ENCODE measurements at regions of chr13 and their contacts with region 1.

Region 1: DNA sequence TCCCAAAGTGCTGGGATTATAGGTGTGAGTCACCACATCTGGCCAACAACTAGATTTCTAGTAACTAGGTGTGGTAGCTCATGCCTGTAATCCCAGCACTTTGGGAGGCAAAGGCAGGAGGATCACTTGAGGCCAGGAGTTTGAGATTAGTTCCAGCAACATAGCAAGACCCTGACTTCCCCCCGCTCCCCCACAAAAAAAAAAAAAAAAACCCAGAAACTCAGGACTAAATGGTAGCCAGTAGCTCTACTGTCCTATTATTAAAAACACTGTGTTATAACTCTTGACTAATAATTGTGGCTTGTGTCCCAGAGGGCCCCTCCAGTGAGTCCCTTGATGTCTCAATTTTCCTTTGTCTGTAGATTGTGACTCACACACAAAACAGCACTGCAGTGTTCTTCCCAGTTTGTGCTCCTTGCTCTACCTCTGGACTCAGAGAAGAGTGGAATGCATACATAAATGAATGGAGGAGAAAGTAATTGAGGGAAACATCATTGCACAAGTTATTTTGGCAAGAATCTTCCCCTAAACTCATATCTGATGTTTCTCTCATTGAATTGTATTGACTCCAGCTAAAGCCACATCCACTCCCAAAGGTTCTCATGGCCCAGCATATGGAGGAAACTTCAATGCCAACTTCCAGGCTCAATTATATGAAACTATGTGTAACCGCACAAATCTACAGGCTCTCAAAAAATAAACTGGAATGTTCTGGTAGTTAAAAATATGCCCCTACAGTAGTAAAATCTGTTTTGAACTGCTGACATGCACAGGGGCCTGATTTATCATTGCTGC is 8.8 kb downstream of the TPT1 start:
- DNase-seq: peak in 2 of 3 donors; percentile 71 to 72
- H3K4me3 ChIP-seq: no peak overlapping the region
- H3K4me3 Mint-ChIP-seq: peak overlapping the region in 1 of 2 donors; percentile 24
- H3K27ac ChIP-seq: peak overlapping the region in 1 of 2 donors; percentile 14
- H3K27ac Mint-ChIP-seq: peak overlapping the region; percentile 27 to 84 (median 74)
- H3K4me1 ChIP-seq: peaks cover 84 to 89% of the 10 kb centered on the region in 2 donors
- H3K4me1 Mint-ChIP-seq: peaks cover 95% of the 10 kb centered on the region
- H3K27me3 ChIP-seq: no peaks in the 10 kb centered on the region
- H3K27me3 Mint-ChIP-seq: peaks cover 0 to 3% (median 2%) of the 10 kb centered on the region in 3 donors
- CTCF ChIP-seq: no peak

Region 2: GRCh38 chr13:44373601-44374348 is 958.5 kb before region 1 on chr13 and contains the start of gene SERP2:
- intact Hi-C with region 1: no loop called
- DNase-seq: no peak
- H3K4me3 ChIP-seq: no peak within 1 kb of the TSS
- H3K4me3 Mint-ChIP-seq: peak within 1 kb of the TSS in 1 of 2 donors; percentile 73
- H3K27ac ChIP-seq: no peak within 1 kb of the TSS
- H3K27ac Mint-ChIP-seq: no peak within 1 kb of the TSS
- H3K4me1 ChIP-seq: peaks cover 6 to 14% of the 10 kb centered on the region in 2 donors
- H3K4me1 Mint-ChIP-seq: peaks cover 11% of the 10 kb centered on the region
- H3K27me3 ChIP-seq: peaks cover 6 to 25% of the 10 kb centered on the region in 2 donors
- H3K27me3 Mint-ChIP-seq: peaks cover 21 to 45% (median 34%) of the 10 kb centered on the region in 3 donors
- CTCF ChIP-seq: no peak
- polyA plus RNA-seq, gene SERP2: not detected

Region 3: GRCh38 chr13:46041419-46041839 is 709.2 kb after region 1 on chr13:
- intact Hi-C with region 1: loop called in 1 of 2 experiments (anchors 10 kb)
- DNase-seq: no peak
- H3K4me3 ChIP-seq: no peak overlapping the region
- H3K4me3 Mint-ChIP-seq: no peak overlapping the region
- H3K27ac ChIP-seq: no peak overlapping the region
- H3K27ac Mint-ChIP-seq: peak overlapping the region in 2 of 7 donors; percentile 19 to 40
- H3K4me1 ChIP-seq: no peaks in the 10 kb centered on the region
- H3K4me1 Mint-ChIP-seq: no peaks in the 10 kb centered on the region
- H3K27me3 ChIP-seq: no peaks in the 10 kb centered on the region
- H3K27me3 Mint-ChIP-seq: peaks cover 0 to 1% (median 1%) of the 10 kb centered on the region in 3 donors
- CTCF ChIP-seq: no peak